GM12878 (cell line): ENCODE measurements at regions of chr9 and their contacts with region 1.

Region 1: DNA sequence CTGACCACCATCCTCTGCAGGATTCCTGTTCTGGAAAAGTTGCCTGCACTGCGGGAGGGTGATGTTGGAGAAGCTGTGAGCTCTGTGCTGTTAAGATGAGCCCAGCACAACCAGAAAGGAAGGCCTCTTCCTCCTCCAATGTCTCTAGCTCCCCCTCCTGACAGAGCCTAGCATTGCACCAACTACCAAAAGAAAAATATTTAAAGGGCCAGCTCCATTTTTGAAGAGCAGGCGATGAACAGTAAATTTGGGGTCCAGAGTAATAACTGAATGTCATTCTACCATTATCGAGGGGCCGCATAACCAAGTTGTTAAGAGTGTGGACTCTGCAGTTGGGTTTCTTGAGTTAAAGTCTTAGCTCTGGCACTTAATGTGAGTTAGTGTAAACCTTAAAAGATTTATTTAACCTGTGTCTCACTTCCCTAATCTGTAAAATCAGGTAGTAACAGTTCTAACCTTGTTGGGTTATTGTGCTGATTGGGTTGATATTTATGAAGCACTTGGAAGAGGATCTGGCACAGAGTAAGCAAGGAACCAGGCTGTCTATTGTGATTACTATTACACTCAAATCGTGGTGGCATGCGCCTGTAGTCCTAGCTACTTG is 3.9 kb downstream of the TEX53 start:
- DNase-seq: peak; percentile 43
- ATAC-seq: peak; percentile 92
- H3K4me3 ChIP-seq: no peak overlapping the region
- H3K27ac ChIP-seq: 0 out of 2 replicates have a peak overlapping the region, but pooled peaks have one; percentile 25
- H3K4me1 ChIP-seq: peaks cover 7% of the 10 kb centered on the region
- H3K27me3 ChIP-seq: no peaks in the 10 kb centered on the region
- CTCF ChIP-seq: peak; percentile 89 to 99 (median 95); a peak in 5 of 6 replicates
- EP300 ChIP-seq: no peak
- POLR2A ChIP-seq: peak; percentile 47; the same call in 1 of the 2 replicates
- RAD21 ChIP-seq: peak; percentile 99

Region 2: DNA sequence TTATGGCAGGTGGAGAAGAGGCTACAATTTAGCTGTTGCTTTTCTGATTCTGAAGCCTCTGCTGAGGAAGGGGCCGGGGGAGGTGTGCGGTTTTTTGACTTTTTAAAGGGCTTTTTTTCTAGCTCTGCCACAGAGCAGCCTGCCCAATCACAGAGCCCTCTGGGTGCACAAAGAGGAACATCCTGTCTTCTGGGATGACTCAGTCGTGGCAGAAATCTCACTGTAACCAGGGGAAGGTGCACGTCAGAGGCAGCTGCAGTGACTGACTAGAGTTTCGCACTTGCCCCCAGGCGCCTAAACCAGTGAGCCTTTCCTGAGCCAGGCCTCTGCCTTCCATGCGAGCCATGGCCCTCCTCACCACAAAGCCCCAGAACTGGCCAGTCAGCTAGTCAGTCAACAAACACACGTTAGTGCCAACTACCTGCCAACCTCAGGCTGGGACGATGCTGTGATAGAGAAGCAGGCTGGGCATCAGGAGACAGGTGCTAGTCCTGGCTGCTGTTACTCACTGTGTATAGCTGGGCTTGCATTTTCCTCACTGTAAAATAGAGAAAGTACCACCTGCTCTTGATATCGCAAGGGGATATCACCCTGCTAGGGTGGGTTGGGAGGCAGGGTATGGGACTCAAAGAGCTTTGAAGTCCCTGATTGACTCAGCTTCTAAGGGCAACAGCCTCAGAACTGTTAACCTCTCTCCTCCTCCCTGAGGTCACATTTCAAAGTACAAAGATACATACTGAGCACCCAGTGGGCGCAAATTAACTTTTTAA is 268.1 kb before region 1 on chr9:
- CTCF ChIA-PET with region 1: interaction called, 7 read pairs
- POLR2A ChIA-PET with region 1: interaction called, 4 read pairs
- RAD21 ChIA-PET with region 1: interaction called, 10 read pairs
- SMC1A ChIA-PET with region 1: interaction called, 4 read pairs
- in situ Hi-C with region 1: no loop called
- intact Hi-C with region 1: no loop called
- DNase-seq: peak; percentile 97
- ATAC-seq: peak; percentile 74
- H3K4me3 ChIP-seq: peak overlapping the region; percentile 93
- H3K27ac ChIP-seq: peak overlapping the region; percentile 100
- H3K4me1 ChIP-seq: peaks cover 66% of the 10 kb centered on the region
- H3K27me3 ChIP-seq: no peaks in the 10 kb centered on the region
- CTCF ChIP-seq: no peak; a peak in 1 of 6 replicates
- EP300 ChIP-seq: peak; percentile 90 to 95
- POLR2A ChIP-seq: peak; percentile 90
- RAD21 ChIP-seq: no peak

Region 3: GRCh38 chr9:114487607-114488300 is 165.9 kb before region 1 on chr9:
- CTCF ChIA-PET with region 1: interaction called, 114 read pairs
- POLR2A ChIA-PET with region 1: interaction called, 6 read pairs
- RAD21 ChIA-PET with region 1: interaction called, 58 read pairs
- SMC1A ChIA-PET with region 1: interaction called, 66 read pairs
- in situ Hi-C with region 1: loop called (anchors 5 kb)
- intact Hi-C with region 1: loop called (anchors 1 kb)
- DNase-seq: peak; percentile 34
- ATAC-seq: peak; percentile 80
- H3K4me3 ChIP-seq: no peak overlapping the region
- H3K27ac ChIP-seq: no peak overlapping the region
- H3K4me1 ChIP-seq: peaks cover 15% of the 10 kb centered on the region
- H3K27me3 ChIP-seq: no peaks in the 10 kb centered on the region
- CTCF ChIP-seq: peak; percentile 90 to 93 (median 93); a peak in 5 of 6 replicates
- EP300 ChIP-seq: no peak
- POLR2A ChIP-seq: no peak
- RAD21 ChIP-seq: peak; percentile 85

Region 4: GRCh38 chr9:114518599-114519022 is 135.0 kb before region 1 on chr9:
- CTCF ChIA-PET with region 1: interaction called, 24 read pairs
- POLR2A ChIA-PET with region 1: interaction called, 3 read pairs
- RAD21 ChIA-PET with region 1: interaction called, 9 read pairs
- SMC1A ChIA-PET with region 1: interaction called, 19 read pairs
- in situ Hi-C with region 1: no loop called
- intact Hi-C with region 1: no loop called
- DNase-seq: peak; percentile 7
- ATAC-seq: peak; percentile 83
- H3K4me3 ChIP-seq: no peak overlapping the region
- H3K27ac ChIP-seq: peak overlapping the region; percentile 19; the same call in 1 of the 2 replicates
- H3K4me1 ChIP-seq: peaks cover 7% of the 10 kb centered on the region
- H3K27me3 ChIP-seq: peaks cover 0 to 3% of the 10 kb centered on the region in 2 experiments; a peak in 2 of 4 replicates
- CTCF ChIP-seq: no peak
- EP300 ChIP-seq: no peak
- POLR2A ChIP-seq: no peak
- RAD21 ChIP-seq: no peak

Region 5: DNA sequence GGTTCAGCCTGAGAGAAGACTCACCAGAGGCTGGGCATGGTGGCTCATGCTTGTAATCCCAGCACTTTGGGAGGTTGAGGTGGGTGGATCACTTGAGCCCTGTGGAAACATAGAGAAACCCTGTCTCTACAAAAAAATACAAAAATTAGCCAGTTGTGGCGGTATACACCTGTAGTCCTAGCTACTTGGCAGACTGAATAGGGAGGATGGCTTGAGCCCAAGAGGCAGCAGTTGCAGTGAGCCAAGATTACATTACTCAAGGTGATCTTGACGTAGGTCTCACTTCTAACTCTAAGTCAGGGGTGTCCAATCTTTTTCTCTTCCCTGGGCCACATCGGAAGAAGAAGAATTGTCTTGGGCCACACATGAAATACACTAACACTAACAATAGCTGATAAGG is 82.3 kb before region 1 on chr9:
- CTCF ChIA-PET with region 1: interaction called, 7 read pairs
- POLR2A ChIA-PET with region 1: no interaction called
- RAD21 ChIA-PET with region 1: interaction called, 10 read pairs
- SMC1A ChIA-PET with region 1: interaction called, 5 read pairs
- in situ Hi-C with region 1: no loop called
- intact Hi-C with region 1: no loop called
- DNase-seq: no peak
- ATAC-seq: no peak
- H3K4me3 ChIP-seq: no peak overlapping the region
- H3K27ac ChIP-seq: no peak overlapping the region
- H3K4me1 ChIP-seq: peaks cover 7% of the 10 kb centered on the region
- H3K27me3 ChIP-seq: no peaks in the 10 kb centered on the region
- CTCF ChIP-seq: no peak
- EP300 ChIP-seq: no peak
- POLR2A ChIP-seq: no peak
- RAD21 ChIP-seq: no peak

Region 6: DNA sequence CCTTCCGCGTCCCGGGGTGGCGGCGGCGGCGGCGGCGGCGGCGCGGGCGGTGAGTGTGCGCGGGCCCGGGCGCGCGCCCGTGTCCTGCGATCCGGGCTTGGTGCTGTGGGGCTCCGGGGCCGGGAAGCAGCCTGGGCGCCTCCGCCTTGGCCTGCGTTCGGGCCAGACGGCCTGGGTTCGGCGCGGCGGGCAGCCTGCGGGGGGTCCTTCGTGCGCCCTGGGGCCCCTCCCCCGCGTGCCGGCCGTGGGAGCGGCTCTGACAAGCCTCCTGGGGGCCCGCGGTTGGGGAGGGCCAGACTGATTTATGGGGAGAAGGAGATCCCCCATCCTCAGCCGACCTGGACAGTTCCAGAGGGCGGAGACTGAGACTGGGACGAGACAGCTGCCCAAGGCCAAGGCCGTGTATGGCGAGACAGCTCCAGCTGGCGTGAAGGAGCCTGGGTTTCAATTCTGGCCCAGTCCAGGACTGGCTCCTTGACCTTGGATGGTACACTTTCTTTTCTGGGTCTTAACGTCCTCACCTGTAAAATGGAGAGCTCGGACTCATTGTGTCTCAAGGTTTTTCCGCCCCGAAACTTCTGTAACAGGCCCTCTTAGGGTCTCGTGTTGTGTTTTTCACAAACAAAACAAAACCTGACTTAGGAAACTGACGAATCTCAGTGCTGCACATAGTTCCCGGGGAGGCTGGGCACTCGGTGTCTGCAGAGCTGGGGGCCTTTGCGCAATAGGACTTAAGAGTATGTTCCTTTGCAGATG is 42.0 kb before region 1 on chr9:
- CTCF ChIA-PET with region 1: interaction called, 74 read pairs
- POLR2A ChIA-PET with region 1: interaction called, 9 read pairs
- RAD21 ChIA-PET with region 1: interaction called, 49 read pairs
- SMC1A ChIA-PET with region 1: interaction called, 28 read pairs
- in situ Hi-C with region 1: no loop called
- intact Hi-C with region 1: loop called (anchors 5 kb)
- DNase-seq: no peak
- ATAC-seq: peak; percentile 20
- H3K4me3 ChIP-seq: peak overlapping the region; percentile 95
- H3K27ac ChIP-seq: peak overlapping the region; percentile 98
- H3K4me1 ChIP-seq: peaks cover 63% of the 10 kb centered on the region
- H3K27me3 ChIP-seq: no peaks in the 10 kb centered on the region
- CTCF ChIP-seq: no peak
- EP300 ChIP-seq: no peak
- POLR2A ChIP-seq: peak; percentile 63
- RAD21 ChIP-seq: no peak

Region 7: GRCh38 chr9:114681594-114682332 is 28.1 kb after region 1 on chr9 and contains the start of gene TEX48:
- CTCF ChIA-PET with region 1: interaction called, 10 read pairs
- POLR2A ChIA-PET with region 1: no interaction called
- RAD21 ChIA-PET with region 1: interaction called, 8 read pairs
- SMC1A ChIA-PET with region 1: interaction called, 6 read pairs
- in situ Hi-C with region 1: no loop called
- intact Hi-C with region 1: no loop called
- DNase-seq: peak; percentile 19
- ATAC-seq: peak; percentile 99
- H3K4me3 ChIP-seq: no peak within 1 kb of the TSS
- H3K27ac ChIP-seq: no peak within 1 kb of the TSS
- H3K4me1 ChIP-seq: no peaks in the 10 kb centered on the region
- H3K27me3 ChIP-seq: peaks cover 0 to 9% of the 10 kb centered on the region in 2 experiments; a peak in 2 of 4 replicates
- CTCF ChIP-seq: peak; percentile 83 to 86 (median 85)
- EP300 ChIP-seq: no peak
- POLR2A ChIP-seq: no peak
- RAD21 ChIP-seq: peak; percentile 88
- polyA plus RNA-seq, gene TEX48: not detected

Region 8: DNA sequence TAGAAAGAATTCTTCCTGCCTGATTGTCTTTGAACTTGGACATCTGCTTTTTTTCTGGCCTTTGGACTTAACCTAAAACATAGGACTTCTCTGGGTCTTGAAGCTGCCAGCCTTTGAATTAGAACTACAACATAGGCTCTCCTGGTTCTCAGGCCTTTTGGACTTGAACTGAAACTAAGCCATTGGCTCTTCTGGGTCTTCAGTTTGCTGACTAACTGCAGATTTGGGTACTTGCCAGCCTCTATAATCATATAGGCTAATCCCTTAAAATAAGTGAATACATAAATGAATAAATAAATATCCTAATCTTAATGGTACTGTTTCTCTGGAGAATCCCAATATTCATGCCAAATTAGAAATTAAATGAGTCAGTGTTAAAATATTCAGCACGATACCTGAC is 1026.6 kb after region 1 on chr9:
- CTCF ChIA-PET with region 1: no interaction called
- POLR2A ChIA-PET with region 1: no interaction called
- RAD21 ChIA-PET with region 1: no interaction called
- SMC1A ChIA-PET with region 1: no interaction called
- in situ Hi-C with region 1: no loop called
- intact Hi-C with region 1: no loop called
- DNase-seq: no peak
- ATAC-seq: no peak
- H3K4me3 ChIP-seq: no peak overlapping the region
- H3K27ac ChIP-seq: no peak overlapping the region
- H3K4me1 ChIP-seq: no peaks in the 10 kb centered on the region
- H3K27me3 ChIP-seq: no peaks in the 10 kb centered on the region
- CTCF ChIP-seq: no peak
- EP300 ChIP-seq: no peak
- POLR2A ChIP-seq: no peak
- RAD21 ChIP-seq: no peak